ENCODE measurements at regions of chr4 and their contacts with region 1.

Region 1: GRCh38 chr4:127880764-127881562 is at the start of gene PLK4:
- DNase-seq: peak; percentile 75
- ATAC-seq: peak; percentile 95
- H3K4me3 ChIP-seq: peak within 1 kb of the TSS; percentile 83 to 84
- H3K27ac ChIP-seq: peak within 1 kb of the TSS; percentile 96
- H3K4me1 ChIP-seq: no peaks in the 10 kb centered on the region; the same call in 1 of the 2 replicates
- H3K27me3 ChIP-seq: no peaks in the 10 kb centered on the region
- CTCF ChIP-seq: no peak
- total RNA-seq, gene PLK4: 21.4 TPM

Region 2: DNA sequence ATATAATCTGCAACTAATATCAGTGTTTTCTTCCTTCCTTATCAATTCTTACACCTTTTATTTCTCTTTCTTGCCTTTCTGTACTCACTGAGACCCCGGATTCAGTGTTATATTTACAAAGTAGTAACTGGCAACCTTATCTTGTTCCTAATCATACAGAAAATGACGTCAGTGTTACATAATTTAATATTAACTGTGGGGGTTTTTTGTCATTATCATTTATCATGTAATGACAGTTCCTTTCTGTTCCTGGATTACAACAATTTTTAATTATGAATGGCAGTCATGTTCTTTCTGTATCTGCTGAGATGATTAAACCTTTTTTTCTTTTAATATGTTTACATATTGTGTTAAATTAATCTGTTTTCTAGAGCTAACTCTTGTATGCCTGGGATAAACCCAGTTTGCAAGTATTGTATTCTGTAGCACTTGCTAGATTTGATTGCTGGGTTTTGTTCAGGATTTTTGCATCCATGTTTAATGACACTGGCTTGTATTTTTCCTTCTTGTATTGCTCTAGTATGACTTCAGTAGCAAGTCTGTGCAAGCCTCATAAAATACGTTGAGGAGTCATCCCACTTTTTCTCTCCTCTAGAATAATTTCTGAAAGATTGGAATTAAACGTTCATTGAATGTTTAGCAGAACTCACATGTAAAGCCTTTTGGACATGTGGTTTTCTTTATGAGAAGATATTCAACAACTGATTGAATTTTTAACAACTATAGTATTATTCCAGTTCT is 109.3 kb before region 1 on chr4:
- CTCF ChIA-PET with region 1: no interaction called
- POLR2A ChIA-PET with region 1: interaction called, 20 read pairs
- in situ Hi-C with region 1: no loop called
- intact Hi-C with region 1: no loop called
- DNase-seq: no peak
- ATAC-seq: no peak
- H3K4me3 ChIP-seq: no peak overlapping the region
- H3K27ac ChIP-seq: no peak overlapping the region
- H3K4me1 ChIP-seq: no peaks in the 10 kb centered on the region
- H3K27me3 ChIP-seq: no peaks in the 10 kb centered on the region
- CTCF ChIP-seq: no peak